HEK293 (cell line): ENCODE measurements at regions of chr1 and their contacts with region 1.

Region 1: DNA sequence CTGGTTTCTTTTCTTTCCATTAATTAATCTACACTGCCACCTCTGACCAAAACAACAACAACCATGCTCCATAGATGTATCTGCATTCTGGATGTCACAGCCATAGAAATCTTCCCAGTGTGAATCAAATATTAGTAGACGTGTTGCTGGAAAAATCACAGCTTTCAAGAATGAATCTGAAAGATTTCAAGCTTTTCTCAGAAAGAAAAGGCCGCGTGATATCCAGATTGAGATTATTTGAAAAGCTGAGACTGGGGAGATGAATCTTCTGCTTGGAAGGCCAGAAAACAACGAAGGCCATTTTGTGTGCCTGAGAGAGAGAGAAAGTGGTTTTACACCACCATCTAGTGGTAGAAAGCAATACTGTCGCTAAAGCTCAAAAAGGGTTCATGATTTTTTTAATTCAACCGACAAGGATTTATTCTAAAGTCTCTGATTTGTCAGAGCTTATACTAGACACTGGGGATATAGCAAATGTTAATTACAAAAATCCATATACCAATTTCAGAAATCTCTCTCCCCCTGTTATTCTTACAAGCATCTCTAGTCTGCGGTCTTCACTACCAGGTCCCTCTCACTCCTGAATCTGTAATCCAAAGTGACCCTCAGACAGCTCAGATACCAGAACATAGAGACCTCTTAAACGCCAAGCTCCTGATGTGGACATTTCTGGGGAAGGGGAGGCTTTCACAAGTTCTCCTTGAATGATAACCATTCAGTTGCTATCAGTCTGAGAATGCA is 87.5 kb upstream of the SGIP1 start:
- H3K4me3 ChIP-seq: no peak overlapping the region
- H3K27ac ChIP-seq: no peak overlapping the region
- H3K4me1 ChIP-seq: no peaks in the 10 kb centered on the region
- CTCF ChIP-seq: peak; percentile 81

Region 2: DNA sequence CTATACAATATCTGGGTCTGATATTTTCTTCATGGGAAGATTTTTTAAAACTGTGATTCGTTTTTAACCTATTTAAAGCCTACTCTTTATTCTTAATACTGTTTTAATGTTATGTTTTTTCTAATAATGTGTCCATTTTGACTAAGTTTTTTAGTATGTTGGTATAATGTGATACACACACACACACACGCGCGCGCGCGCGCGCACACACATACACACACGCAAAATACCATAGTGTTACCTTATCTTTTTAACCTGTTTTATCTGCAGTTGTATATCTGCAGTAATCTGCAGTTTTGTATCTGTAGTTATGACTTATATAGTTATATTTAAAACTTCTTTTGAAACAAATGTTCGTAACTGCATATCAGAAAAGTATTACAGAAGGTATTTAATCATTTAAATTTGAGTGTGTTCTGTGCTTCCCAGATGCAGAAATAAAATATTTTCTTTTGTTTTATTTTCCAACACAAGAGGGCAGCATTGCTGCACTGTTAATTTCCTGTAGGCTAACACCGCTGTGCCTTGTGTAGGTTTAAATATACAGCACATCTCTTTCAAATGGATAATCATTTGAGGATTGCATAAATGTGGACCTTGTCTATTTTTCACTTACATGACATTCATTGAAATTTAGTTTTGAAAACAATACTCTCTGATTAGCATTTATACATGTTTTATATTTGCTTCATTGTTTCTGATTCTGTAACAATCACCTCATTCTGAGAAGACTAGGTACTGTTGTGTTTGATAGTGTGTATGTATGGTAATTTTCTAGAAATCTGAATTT is 487.7 kb before region 1 on chr1:
- CTCF ChIA-PET with region 1: interaction called, 17 read pairs
- POLR2A ChIA-PET with region 1: no interaction called
- H3K4me3 ChIP-seq: no peak overlapping the region
- H3K27ac ChIP-seq: no peak overlapping the region
- H3K4me1 ChIP-seq: peaks cover 3% of the 10 kb centered on the region; the same call in 1 of the 2 replicates
- CTCF ChIP-seq: peak; percentile 15; the same call in 1 of the 2 replicates

Region 3: DNA sequence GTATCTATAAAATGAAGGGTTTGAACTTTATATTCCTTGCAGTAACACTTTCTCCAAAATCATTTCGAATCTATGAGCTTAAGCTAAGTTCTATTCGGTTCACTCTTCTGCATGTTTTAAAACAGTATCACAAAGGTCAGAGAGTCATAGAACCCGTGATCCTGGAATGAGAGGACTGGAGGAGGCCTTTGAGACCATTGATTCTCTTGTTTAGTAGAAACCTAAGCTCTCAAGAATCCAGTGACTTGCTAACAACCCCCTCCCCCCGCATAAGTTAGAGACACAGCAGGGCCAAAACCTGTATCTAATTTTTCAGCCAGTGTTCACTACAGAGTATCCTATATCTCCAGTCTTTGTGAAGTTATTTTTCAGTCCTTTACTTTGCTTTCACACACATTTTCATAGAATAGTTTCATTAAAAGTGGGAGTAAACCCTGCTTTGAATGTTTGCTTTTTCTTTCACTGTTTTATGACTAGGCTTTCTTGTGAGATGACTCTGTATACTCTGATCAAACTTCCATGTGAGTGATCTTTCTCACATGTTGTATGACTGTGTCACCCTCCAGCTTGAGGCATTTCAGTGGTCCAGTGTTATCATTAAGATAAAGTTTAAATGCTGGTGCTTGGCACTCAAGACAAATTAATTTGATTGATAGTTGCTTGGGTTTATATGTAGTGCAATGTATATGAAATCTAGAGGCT is 187.9 kb before region 1 on chr1:
- CTCF ChIA-PET with region 1: interaction called, 127 read pairs
- POLR2A ChIA-PET with region 1: no interaction called
- H3K4me3 ChIP-seq: no peak overlapping the region
- H3K27ac ChIP-seq: no peak overlapping the region
- H3K4me1 ChIP-seq: no peaks in the 10 kb centered on the region
- CTCF ChIP-seq: no peak

Region 4: DNA sequence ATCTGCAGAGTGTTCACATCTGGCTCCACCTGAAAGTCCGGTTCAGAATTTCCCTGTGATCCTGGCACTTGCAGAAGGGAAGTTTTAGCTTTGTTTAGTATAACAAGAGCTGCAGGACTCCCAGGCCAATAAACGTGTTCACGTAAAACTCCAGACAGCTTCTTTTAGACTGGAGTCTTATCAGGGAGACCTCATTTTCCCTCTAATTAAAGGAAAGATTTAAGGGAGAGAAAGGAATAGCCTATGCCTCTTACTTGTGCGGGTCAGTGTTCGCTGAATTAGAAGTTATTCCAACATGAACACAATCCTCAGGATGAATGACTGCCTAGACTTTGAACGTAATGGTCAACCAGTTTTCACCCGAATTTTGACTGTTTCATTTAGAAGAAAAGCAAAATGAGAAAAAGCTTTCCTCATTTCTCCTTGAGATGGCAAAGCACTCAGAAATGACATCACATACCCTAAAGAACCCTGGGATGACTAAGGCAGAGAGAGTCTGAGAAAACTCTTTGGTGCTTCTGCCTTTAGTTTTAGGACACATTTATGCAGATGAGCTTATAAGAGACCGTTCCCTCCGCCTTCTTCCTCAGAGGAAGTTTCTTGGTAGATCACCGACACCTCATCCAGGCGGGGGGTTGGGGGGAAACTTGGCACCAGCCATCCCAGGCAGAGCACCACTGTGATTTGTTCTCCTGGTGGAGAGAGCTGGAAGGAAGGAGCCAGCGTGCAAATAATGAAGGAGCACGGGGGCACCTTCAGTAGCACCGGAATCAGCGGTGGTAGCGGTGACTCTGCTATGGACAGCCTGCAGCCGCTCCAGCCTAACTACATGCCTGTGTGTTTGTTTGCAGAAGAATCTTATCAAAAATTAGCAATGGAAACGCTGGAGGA is 114.5 kb before region 1 on chr1:
- CTCF ChIA-PET with region 1: interaction called, 14 read pairs
- POLR2A ChIA-PET with region 1: no interaction called
- H3K4me3 ChIP-seq: peak overlapping the region; percentile 42
- H3K27ac ChIP-seq: peak overlapping the region; percentile 60
- H3K4me1 ChIP-seq: peaks cover 5% of the 10 kb centered on the region; the same call in 1 of the 2 replicates
- CTCF ChIP-seq: peak; percentile 38; the same call in 1 of the 2 replicates

Region 5: DNA sequence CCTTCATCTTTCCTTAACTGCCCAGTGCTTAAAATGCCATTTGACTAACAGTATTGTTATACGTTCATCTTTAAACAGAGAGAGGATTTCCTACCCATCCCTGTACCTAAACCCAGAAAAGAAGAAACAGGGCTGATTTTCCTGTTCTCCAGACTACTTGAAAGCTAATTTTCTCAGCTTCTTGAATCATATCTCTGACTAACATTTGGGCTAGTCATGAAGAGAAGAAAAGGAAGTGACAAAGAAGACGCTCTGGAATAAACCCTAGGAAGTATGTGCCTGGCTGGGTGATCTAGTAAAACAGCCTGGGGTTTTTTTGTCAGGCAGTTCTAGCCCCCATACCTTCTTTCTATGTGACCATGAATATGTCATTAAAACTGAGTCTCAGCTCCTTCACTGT is 42.7 kb after region 1 on chr1:
- CTCF ChIA-PET with region 1: no interaction called
- POLR2A ChIA-PET with region 1: no interaction called
- H3K4me3 ChIP-seq: no peak overlapping the region
- H3K27ac ChIP-seq: no peak overlapping the region
- H3K4me1 ChIP-seq: no peaks in the 10 kb centered on the region
- CTCF ChIP-seq: no peak

Region 6: GRCh38 chr1:66725885-66726665 is 279.6 kb after region 1 on chr1:
- CTCF ChIA-PET with region 1: interaction called, 17 read pairs
- POLR2A ChIA-PET with region 1: no interaction called
- H3K4me3 ChIP-seq: no peak overlapping the region
- H3K27ac ChIP-seq: no peak overlapping the region
- H3K4me1 ChIP-seq: no peaks in the 10 kb centered on the region
- CTCF ChIP-seq: peak; percentile 74